ENCODE measurements at regions of chr7 and their contacts with region 1.

Region 1: GRCh38 chr7:101792051-101792681 is 25.3 kb upstream of the CUX1 start:
- DNase-seq: no peak
- H3K4me3 Mint-ChIP-seq: no peak overlapping the region
- H3K27ac Mint-ChIP-seq: no peak overlapping the region
- H3K4me1 Mint-ChIP-seq: no peaks in the 10 kb centered on the region
- H3K27me3 Mint-ChIP-seq: peaks cover 2% of the 10 kb centered on the region

Region 2: DNA sequence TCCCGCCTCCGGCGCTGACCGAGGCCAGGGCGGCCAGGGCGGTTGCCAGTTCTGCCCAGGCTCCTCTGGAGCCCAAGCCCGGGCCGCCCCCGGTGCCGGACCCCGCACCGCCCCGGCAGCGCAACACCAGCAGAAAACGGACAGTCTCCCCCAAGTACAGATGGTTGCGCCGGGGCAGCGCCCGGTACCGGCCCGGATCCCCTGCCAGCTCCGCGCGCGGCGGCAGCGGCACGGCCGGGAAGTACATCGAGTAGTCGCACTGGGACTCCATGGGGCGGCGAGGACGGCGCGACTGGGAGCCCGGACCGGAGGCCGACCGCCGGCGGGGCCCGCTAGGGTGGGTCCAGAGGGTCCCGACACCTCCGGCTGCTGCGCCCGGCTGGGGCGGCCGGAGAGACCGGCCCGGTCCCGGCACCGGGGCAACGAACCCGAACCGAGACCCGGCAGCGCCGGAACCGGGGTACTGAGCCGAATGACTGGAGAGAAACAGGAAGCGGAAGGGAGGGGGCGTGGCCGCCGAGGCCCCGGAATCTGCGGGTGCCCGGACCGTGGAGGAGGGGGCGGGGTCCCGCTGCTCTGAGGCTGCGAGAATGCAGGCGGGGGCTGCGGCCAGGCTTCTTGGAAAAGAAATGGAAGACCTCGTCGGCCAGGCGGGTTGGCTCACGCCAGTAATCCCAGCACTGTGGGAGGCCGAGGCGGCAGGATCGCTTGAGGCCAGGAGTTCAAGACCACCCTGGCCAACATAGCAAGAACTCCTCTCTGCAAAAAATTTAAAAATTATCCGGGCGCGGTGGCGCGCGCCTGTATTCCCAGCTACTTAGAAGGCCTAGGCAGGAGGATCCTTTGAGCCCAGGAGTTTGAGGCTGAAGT is 1633.7 kb before region 1 on chr7 and contains the start of gene TRAPPC14:
- intact Hi-C with region 1: no loop called
- DNase-seq: peak; percentile 89
- H3K4me3 Mint-ChIP-seq: peak within 1 kb of the TSS; percentile 81
- H3K27ac Mint-ChIP-seq: peak within 1 kb of the TSS; percentile 81
- H3K4me1 Mint-ChIP-seq: peaks cover 49% of the 10 kb centered on the region
- H3K27me3 Mint-ChIP-seq: no peaks in the 10 kb centered on the region
- total RNA-seq, gene TRAPPC14: 43.9 and 44.3 TPM in 2 replicates

Region 3: GRCh38 chr7:101273206-101273605 is 519.0 kb before region 1 on chr7:
- intact Hi-C with region 1: loop called (anchors 5 kb)
- DNase-seq: no peak
- H3K4me3 Mint-ChIP-seq: no peak overlapping the region
- H3K27ac Mint-ChIP-seq: no peak overlapping the region
- H3K4me1 Mint-ChIP-seq: no peaks in the 10 kb centered on the region
- H3K27me3 Mint-ChIP-seq: no peaks in the 10 kb centered on the region

Region 4: DNA sequence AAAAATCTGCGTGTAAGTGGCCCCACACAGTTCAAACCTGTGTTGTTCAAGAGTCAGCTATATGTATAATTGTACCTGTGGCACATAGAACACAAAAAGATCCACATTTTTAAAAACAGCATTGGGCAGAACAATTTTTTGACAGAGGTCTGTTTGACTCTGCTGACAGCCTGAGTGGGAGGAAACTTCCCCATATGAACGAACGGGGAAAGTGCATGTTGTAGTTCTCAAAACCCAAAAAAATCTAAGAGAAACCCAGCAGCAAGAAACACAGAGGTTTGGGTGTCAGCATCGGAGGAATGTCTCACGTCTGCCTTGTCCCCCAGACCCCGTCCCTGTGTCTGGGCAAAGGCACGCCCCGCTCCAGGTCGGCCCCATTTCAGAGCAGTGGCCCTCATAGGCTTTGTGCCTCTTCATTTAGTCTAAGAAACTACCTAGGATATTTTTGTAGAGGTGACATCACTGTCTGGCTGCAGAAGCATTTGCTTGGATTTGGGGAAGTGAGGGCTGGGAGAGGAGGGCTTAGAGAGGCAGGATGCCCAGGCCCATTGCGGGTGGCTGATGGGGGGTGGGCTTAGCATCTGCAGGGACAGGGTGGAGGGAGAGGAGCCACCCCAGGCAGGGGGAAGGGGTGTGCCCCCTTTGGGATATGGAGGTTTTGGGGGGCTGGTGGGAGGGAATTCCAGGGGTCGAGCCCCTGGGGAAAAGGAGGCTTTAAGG is 36.3 kb after region 1 on chr7:
- intact Hi-C with region 1: no loop called
- DNase-seq: no peak
- H3K4me3 Mint-ChIP-seq: no peak overlapping the region
- H3K27ac Mint-ChIP-seq: no peak overlapping the region
- H3K4me1 Mint-ChIP-seq: no peaks in the 10 kb centered on the region
- H3K27me3 Mint-ChIP-seq: no peaks in the 10 kb centered on the region

Measured in activated T-helper 1 cell treated with anti-CD3 and anti-CD28 coated beads, Interleukin-12 subunit alpha, Interleukin-12 subunit beta, Interleukin-2, Interleukin-4 antibody, amounts not matched to agents 30 ng/mL and 10 ng/mL and 1 ng/mL, durations not matched to agents 14 hours and 24 hours and 36 hours (primary cell).